CD4-positive, alpha-beta memory T cell (primary cell): ENCODE measurements at regions of chr9 and their contacts with region 1.

Region 1: DNA sequence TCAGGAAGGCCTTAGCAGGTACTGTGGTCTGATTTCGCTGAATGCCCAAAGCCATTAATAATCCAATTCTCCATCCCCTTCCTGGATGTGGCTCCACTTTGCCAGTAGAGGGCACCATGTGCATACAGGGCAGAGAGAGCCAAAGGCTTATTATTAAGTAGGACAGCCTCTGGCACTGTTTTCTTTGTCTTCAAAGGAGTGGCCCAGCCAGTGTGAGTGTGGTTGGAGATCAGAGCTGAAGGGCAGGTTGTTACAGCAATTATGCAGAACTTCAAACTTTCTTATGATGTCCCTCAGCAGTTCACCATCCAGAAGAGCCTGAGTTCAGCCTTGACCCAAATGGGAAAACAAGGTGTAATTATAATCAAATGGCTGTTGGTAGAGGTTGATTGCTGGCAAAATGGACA is 38.6 kb upstream of the CEMIP2 start:
- DNase-seq: peak; percentile 60 to 64 (median 63)
- H3K4me3 ChIP-seq: no peak overlapping the region
- H3K4me3 Mint-ChIP-seq: peak overlapping the region in 2 of 8 donors; percentile 18 to 32
- H3K27ac ChIP-seq: no peak overlapping the region
- H3K27ac Mint-ChIP-seq: peak overlapping the region in 6 of 7 donors; percentile 2 to 93 (median 54)
- H3K4me1 ChIP-seq: peaks cover 7% of the 10 kb centered on the region
- H3K4me1 Mint-ChIP-seq: peaks cover 5 to 7% (median 6%) of the 10 kb centered on the region in 4 donors
- H3K27me3 ChIP-seq: no peaks in the 10 kb centered on the region
- H3K27me3 Mint-ChIP-seq: no peaks in the 10 kb centered on the region

Region 2: DNA sequence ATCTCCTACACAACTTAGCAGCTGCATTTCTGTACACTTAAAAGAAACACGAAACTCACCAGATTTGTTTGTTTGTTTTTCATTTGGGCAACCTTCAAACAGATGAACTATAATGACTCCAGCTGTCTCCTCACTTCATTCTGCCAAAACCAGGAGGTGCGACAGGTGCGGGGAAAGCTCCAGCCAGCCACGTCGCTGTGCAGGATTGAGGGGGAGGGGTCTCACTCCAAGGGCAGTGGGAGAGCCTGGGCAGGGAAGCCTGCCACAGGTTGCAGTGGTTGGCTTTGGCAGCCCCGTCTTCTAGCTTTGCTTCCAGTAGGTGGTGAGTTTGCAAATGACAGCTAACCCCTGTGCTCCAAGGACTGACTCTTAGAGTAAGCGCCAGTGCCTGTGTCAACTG is 254.4 kb before region 1 on chr9:
- CTCF ChIA-PET with region 1: no interaction called
- POLR2A ChIA-PET with region 1: no interaction called
- intact Hi-C with region 1: no loop called
- DNase-seq: no peak
- H3K4me3 ChIP-seq: no peak overlapping the region
- H3K4me3 Mint-ChIP-seq: no peak overlapping the region
- H3K27ac ChIP-seq: no peak overlapping the region
- H3K27ac Mint-ChIP-seq: no peak overlapping the region
- H3K4me1 ChIP-seq: no peaks in the 10 kb centered on the region
- H3K4me1 Mint-ChIP-seq: peaks cover 0 to 4% (median 0%) of the 10 kb centered on the region in 4 donors
- H3K27me3 ChIP-seq: no peaks in the 10 kb centered on the region
- H3K27me3 Mint-ChIP-seq: peaks cover 17 to 29% of the 10 kb centered on the region in 2 donors

Region 3: GRCh38 chr9:71795097-71795813 is 11.6 kb before region 1 on chr9:
- CTCF ChIA-PET with region 1: interaction called, 98 read pairs
- POLR2A ChIA-PET with region 1: interaction called, 9 read pairs
- intact Hi-C with region 1: loop called (anchors 1 kb)
- DNase-seq: peak; percentile 47 to 81 (median 74)
- H3K4me3 ChIP-seq: peak overlapping the region; percentile 10 to 14
- H3K4me3 Mint-ChIP-seq: peak overlapping the region; percentile 61 to 79 (median 70)
- H3K27ac ChIP-seq: peak overlapping the region; percentile 49
- H3K27ac Mint-ChIP-seq: peak overlapping the region; percentile 85 to 97 (median 92)
- H3K4me1 ChIP-seq: peaks cover 74% of the 10 kb centered on the region
- H3K4me1 Mint-ChIP-seq: peaks cover 39 to 68% (median 57%) of the 10 kb centered on the region in 4 donors
- H3K27me3 ChIP-seq: no peaks in the 10 kb centered on the region
- H3K27me3 Mint-ChIP-seq: no peaks in the 10 kb centered on the region

Region 4: GRCh38 chr9:72271613-72272478 is 464.9 kb after region 1 on chr9:
- CTCF ChIA-PET with region 1: interaction called, 3 read pairs
- POLR2A ChIA-PET with region 1: no interaction called
- intact Hi-C with region 1: loop called (anchors 1 kb)
- DNase-seq: peak in 4 of 5 donors; percentile 18 to 28 (median 23)
- H3K4me3 ChIP-seq: no peak overlapping the region
- H3K4me3 Mint-ChIP-seq: no peak overlapping the region
- H3K27ac ChIP-seq: no peak overlapping the region
- H3K27ac Mint-ChIP-seq: no peak overlapping the region
- H3K4me1 ChIP-seq: no peaks in the 10 kb centered on the region
- H3K4me1 Mint-ChIP-seq: no peaks in the 10 kb centered on the region
- H3K27me3 ChIP-seq: no peaks in the 10 kb centered on the region
- H3K27me3 Mint-ChIP-seq: peaks cover 3 to 9% of the 10 kb centered on the region in 2 donors